ENCODE measurements at regions of chr3 and their contacts with region 1.

Region 1: GRCh38 chr3:65245133-65246063 is 557.6 kb upstream of the ADAMTS9 start:
- DNase-seq: no peak

Region 2: GRCh38 chr3:64382153-64382552 is 863.2 kb before region 1 on chr3:
- intact Hi-C with region 1: no loop called
- DNase-seq: no peak

Region 3: DNA sequence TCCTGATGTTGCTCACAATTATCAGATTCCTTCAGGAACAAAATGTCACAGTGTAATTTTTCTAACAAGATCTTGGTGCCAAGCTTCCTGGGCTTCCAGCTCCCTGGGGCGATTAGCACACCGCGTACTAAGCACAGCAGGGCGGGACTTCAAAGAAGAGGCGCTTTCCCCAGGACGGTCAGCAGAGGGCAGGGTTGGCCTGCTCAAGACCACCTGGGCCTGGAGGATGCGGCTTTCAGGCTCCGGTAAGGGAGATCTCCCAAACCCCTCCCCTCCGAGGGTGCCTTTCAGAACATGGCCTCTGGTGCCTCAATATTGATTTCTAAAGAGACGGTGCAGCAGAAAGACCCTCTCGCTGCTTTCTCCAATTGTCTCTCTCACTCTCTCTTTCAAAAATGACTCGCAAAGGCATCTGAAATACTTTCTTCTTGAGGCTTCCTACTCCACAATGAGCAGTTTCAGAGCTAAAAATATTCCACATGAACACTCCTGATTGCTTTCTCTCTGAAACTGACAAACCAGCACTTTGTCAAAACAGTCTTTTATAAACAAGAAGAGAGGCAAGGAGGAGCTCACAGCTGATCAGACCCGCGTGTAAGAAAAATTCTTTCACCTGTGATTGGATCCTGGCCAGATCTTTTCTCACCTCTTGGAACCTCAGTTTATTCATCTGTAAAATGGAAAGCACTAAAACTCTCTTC is 711.6 kb before region 1 on chr3:
- intact Hi-C with region 1: loop called (anchors 2 kb)
- DNase-seq: peak; percentile 83

Measured in cardiac septum (tissue), 1 donor.